WTC11 (cell line): ENCODE measurements at regions of chr19 and their contacts with region 1.

Region 1: GRCh38 chr19:3429581-3430080 is 50.7 kb downstream of the SMIM24 start:
- DNase-seq: peak; percentile 94
- ATAC-seq: peak; percentile 90
- H3K4me3 Mint-ChIP-seq: no peak overlapping the region
- H3K27ac Mint-ChIP-seq: no peak overlapping the region
- H3K4me1 Mint-ChIP-seq: peaks cover 6% of the 10 kb centered on the region
- H3K27me3 Mint-ChIP-seq: peaks cover 8% of the 10 kb centered on the region
- CTCF ChIP-seq: peak; percentile 99

Region 2: GRCh38 chr19:3330047-3330446 is 99.6 kb before region 1 on chr19:
- CTCF ChIA-PET with region 1: interaction called, 23 read pairs
- POLR2A ChIA-PET with region 1: no interaction called
- DNase-seq: no peak
- ATAC-seq: no peak
- H3K4me3 Mint-ChIP-seq: no peak overlapping the region
- H3K27ac Mint-ChIP-seq: no peak overlapping the region
- H3K4me1 Mint-ChIP-seq: no peaks in the 10 kb centered on the region
- H3K27me3 Mint-ChIP-seq: peaks cover 37% of the 10 kb centered on the region
- CTCF ChIP-seq: no peak

Region 3: DNA sequence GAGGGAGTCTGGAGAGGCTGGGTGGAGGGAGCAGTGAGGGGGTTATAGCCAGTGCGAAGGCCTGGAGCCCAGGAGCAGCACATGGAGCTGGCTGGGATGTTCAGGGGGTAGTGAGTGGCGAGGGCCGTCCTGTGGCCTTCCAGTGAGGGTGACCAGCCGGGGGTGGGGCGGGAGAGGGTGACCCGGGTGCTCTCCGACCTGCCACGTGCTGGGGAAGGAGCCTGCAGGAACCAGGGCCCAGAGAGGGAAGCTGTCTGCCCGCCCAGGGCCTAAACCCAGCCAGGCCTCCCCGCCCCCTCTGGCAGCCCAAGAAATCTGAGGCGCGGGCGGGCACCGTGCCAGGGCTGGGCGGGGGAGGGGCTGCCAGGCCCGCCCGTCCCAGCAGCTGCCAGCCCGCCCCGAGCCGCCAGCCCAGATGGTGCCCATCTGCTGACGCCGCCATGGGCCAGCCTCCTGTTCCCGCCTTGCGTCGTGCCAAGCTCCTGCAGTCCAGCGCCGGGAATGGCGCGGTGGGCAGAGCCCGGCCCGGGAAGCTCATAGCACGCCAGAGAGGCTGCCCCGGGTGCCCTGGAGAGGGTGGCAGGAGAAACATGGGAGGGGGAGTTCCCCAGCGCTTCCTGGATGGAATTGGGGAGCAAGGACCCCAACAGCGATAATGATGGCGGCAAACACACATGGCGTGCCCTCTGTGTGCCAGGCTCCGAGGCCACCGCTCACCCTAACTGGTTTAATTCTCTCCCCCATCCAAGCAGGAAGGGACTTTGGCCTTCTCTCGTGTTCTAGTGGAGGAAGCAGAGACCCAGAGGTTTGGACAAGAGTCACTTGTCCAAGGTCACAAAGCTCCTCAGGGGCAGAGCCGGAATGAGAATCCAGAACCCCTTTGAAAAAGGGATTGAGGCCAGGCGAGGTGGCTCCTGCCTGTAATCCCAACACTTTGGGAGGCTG is 41.7 kb before region 1 on chr19:
- CTCF ChIA-PET with region 1: interaction called, 14 read pairs
- POLR2A ChIA-PET with region 1: no interaction called
- DNase-seq: no peak
- ATAC-seq: no peak
- H3K4me3 Mint-ChIP-seq: no peak overlapping the region
- H3K27ac Mint-ChIP-seq: no peak overlapping the region
- H3K4me1 Mint-ChIP-seq: peaks cover 19% of the 10 kb centered on the region
- H3K27me3 Mint-ChIP-seq: peaks cover 9% of the 10 kb centered on the region; the same call in 1 of the 2 replicates
- CTCF ChIP-seq: no peak

Region 4: DNA sequence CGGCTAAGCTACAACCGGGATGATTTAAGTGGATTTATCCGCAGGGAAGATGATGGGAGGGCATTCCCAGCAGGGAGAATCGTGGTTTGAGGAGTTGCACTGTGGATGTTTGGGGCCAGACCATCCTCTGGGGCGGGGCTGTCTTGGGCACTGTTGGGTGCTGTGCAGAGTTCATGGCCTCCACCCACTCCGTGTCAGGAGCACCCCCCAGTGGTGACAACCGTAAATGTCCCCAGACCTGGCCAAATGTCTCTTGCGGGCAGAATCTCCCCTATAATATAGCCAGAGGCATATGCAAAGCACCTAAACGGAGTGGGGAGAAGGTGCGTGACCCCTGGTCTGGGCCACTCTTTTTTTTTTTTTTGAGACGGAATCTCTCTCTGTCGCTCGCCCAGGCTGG is 10.5 kb after region 1 on chr19:
- CTCF ChIA-PET with region 1: interaction called, 21 read pairs
- POLR2A ChIA-PET with region 1: no interaction called
- DNase-seq: peak; percentile 87
- ATAC-seq: peak; percentile 71
- H3K4me3 Mint-ChIP-seq: no peak overlapping the region
- H3K27ac Mint-ChIP-seq: no peak overlapping the region
- H3K4me1 Mint-ChIP-seq: peaks cover 17% of the 10 kb centered on the region
- H3K27me3 Mint-ChIP-seq: no peaks in the 10 kb centered on the region
- CTCF ChIP-seq: peak; percentile 62

Region 5: DNA sequence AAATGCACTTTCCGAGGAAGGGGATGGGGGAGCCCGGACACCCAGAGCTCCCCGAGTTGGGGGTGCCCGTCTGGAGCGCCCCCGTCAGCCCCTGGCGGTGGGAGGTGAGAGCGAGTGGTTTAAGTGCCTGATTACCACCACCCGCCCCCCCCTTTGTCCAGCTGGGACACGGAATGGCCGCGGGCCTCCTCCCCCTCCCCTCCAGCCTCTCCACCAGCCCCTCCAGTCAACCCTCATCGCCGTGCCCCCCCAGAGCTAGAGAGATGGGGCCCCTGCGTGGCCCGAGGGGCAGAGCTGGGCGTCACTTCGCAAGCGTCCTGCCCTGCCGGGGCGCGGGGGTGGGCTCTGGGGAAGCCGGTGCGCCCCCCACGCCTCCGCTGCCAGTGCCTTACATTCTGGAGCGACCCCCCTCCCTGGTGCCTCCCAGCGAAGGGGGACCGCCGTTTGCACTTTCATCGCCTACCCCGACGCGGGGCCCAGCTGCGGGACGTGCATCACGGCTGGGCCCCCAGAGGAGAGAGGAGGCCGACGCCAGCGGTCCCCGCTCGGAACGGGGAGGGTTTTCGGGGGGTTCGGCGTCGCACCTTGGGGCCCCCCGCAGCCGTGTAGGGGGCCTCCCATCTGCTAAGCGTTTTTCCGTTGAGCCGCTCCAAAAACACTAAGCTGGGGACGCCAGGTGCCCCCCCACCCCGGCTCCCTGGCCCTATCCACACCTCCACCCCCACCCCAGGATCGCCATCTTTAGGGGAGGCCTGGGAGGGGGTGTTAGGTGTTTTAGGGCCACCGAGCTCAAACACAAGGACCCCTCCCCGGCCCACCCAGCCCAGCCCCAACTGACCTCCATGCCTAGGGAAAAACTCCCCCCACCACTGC is 34.3 kb after region 1 on chr19:
- CTCF ChIA-PET with region 1: interaction called, 13 read pairs
- POLR2A ChIA-PET with region 1: no interaction called
- DNase-seq: no peak
- ATAC-seq: peak; percentile 12
- H3K4me3 Mint-ChIP-seq: peak overlapping the region; percentile 49
- H3K27ac Mint-ChIP-seq: no peak overlapping the region
- H3K4me1 Mint-ChIP-seq: peaks cover 14% of the 10 kb centered on the region
- H3K27me3 Mint-ChIP-seq: peaks cover 77% of the 10 kb centered on the region
- CTCF ChIP-seq: no peak